ENCODE measurements at regions of chr17 and their contacts with region 1.

Region 1: GRCh38 chr17:28925912-28926365 is 23.1 kb upstream of the DHRS13 start:
- DNase-seq: peak; percentile 74
- ATAC-seq: peak; percentile 93
- H3K4me3 ChIP-seq: no peak overlapping the region
- H3K27ac ChIP-seq: peak overlapping the region; percentile 93
- H3K4me1 ChIP-seq: peaks cover 18% of the 10 kb centered on the region
- H3K27me3 ChIP-seq: no peaks in the 10 kb centered on the region
- CTCF ChIP-seq: no peak

Region 2: DNA sequence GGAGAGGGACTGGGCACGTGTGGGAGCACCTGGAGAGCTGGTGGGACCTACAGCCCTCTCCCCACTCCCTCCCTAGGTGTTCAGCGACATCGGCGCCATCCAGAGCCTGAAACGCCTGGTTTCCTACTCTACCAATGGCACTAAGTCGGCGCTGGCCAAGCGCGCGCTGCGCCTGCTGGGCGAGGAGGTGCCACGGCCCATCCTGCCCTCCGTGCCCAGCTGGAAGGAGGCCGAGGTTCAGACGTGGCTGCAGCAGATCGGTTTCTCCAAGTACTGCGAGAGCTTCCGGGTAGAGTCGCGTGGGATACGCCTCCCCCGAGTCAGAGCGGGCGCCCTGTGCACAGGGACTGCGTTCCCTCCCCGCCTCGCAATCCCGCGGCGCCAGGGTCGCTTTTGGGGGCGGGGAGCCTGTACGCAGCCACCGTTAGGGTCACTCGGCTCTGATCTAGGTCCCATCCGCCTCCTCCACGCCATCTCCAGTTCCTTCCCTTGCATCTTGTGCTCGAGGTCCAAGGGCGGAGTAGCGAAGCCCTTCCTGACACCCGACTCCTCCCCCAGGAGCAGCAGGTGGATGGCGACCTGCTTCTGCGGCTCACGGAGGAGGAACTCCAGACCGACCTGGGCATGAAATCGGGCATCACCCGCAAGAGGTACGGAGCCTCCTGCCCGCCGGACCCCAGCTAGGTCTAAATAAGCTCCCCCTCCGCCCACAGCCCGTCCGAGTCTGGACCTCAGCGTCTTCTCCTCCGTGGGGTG is 541.5 kb before region 1 on chr17:
- CTCF ChIA-PET with region 1: no interaction called
- POLR2A ChIA-PET with region 1: no interaction called
- intact Hi-C with region 1: no loop called
- DNase-seq: peak; percentile 66
- ATAC-seq: peak; percentile 90
- H3K4me3 ChIP-seq: peak overlapping the region; percentile 81
- H3K27ac ChIP-seq: peak overlapping the region; percentile 35
- H3K4me1 ChIP-seq: peaks cover 22% of the 10 kb centered on the region
- H3K27me3 ChIP-seq: no peaks in the 10 kb centered on the region
- CTCF ChIP-seq: no peak

Region 3: GRCh38 chr17:28871056-28871579 is 54.8 kb before region 1 on chr17:
- CTCF ChIA-PET with region 1: no interaction called
- POLR2A ChIA-PET with region 1: interaction called, 17 read pairs
- intact Hi-C with region 1: no loop called
- DNase-seq: no peak
- ATAC-seq: no peak
- H3K4me3 ChIP-seq: no peak overlapping the region
- H3K27ac ChIP-seq: no peak overlapping the region
- H3K4me1 ChIP-seq: peaks cover 7% of the 10 kb centered on the region; the same call in 1 of the 2 replicates
- H3K27me3 ChIP-seq: no peaks in the 10 kb centered on the region
- CTCF ChIP-seq: no peak

Region 4: DNA sequence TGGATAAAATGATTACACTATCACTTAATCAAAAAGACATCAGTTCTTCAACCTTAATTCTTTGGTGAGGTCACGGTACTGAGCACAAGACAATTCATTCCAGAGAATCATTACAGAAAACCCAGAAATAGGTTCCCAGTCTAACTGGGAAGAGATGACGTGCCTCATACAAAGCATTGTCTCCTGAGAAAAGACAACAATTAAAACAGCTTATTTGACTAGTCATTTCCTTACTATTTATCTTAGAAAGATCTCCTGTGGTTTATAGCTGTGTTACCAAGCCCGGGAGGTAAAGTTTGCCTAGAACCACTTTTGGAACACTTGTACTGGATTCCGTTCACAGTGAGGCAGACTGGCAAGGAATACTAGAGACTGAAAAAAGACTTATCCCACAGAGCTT is 20.3 kb after region 1 on chr17:
- CTCF ChIA-PET with region 1: no interaction called
- POLR2A ChIA-PET with region 1: no interaction called
- intact Hi-C with region 1: loop called (anchors 1 kb)
- DNase-seq: peak; percentile 83
- ATAC-seq: peak; percentile 62
- H3K4me3 ChIP-seq: peak overlapping the region; percentile 35; the same call in 1 of the 2 replicates
- H3K27ac ChIP-seq: peak overlapping the region; percentile 99
- H3K4me1 ChIP-seq: peaks cover 32% of the 10 kb centered on the region
- H3K27me3 ChIP-seq: no peaks in the 10 kb centered on the region
- CTCF ChIP-seq: no peak

Measured in PC-3 (cell line).